ENCODE measurements at regions of chr21 and their contacts with region 1.

Region 1: GRCh38 chr21:36028127-36029069 is 31.9 kb downstream of the SETD4 start:
- DNase-seq: peak; percentile 17 to 84
- H3K4me3 ChIP-seq: no peak overlapping the region
- H3K27ac ChIP-seq: no peak overlapping the region
- H3K4me1 ChIP-seq: no peaks in the 10 kb centered on the region
- H3K27me3 ChIP-seq: no peaks in the 10 kb centered on the region
- CTCF ChIP-seq: peak; percentile 76 to 94 (median 91)

Region 2: GRCh38 chr21:34693192-34693810 is 1335.1 kb before region 1 on chr21:
- intact Hi-C with region 1: loop called (anchors 5 kb)
- DNase-seq: no peak
- H3K4me3 ChIP-seq: no peak overlapping the region
- H3K27ac ChIP-seq: no peak overlapping the region
- H3K4me1 ChIP-seq: no peaks in the 10 kb centered on the region
- H3K27me3 ChIP-seq: no peaks in the 10 kb centered on the region
- CTCF ChIP-seq: peak; percentile 51 to 60 (median 60)